Activated CD4-positive, alpha-beta T cell treated with anti-CD3 and anti-CD28 coated beads, Interleukin-2, amount 10 ng/mL, durations not matched to agents 24 days and 14 days (primary cell): ENCODE measurements at regions of chr5 and their contacts with region 1.

Region 1: GRCh38 chr5:140145818-140146522 is 20.2 kb downstream of the IGIP start:
- DNase-seq: peak; percentile 85
- H3K4me3 Mint-ChIP-seq: no peak overlapping the region
- H3K27ac Mint-ChIP-seq: no peak overlapping the region
- H3K4me1 Mint-ChIP-seq: peaks cover 8% of the 10 kb centered on the region
- H3K27me3 Mint-ChIP-seq: peaks cover 43% of the 10 kb centered on the region

Region 2: GRCh38 chr5:140157032-140157803 is 11.2 kb after region 1 on chr5:
- intact Hi-C with region 1: loop called (anchors 1 kb)
- DNase-seq: peak; percentile 96
- H3K4me3 Mint-ChIP-seq: peak overlapping the region; percentile 63
- H3K27ac Mint-ChIP-seq: no peak overlapping the region
- H3K4me1 Mint-ChIP-seq: peaks cover 6% of the 10 kb centered on the region
- H3K27me3 Mint-ChIP-seq: peaks cover 6% of the 10 kb centered on the region